Heart right ventricle (tissue), 16 donors: ENCODE measurements at regions of chr3 and their contacts with region 1.

Region 1: DNA sequence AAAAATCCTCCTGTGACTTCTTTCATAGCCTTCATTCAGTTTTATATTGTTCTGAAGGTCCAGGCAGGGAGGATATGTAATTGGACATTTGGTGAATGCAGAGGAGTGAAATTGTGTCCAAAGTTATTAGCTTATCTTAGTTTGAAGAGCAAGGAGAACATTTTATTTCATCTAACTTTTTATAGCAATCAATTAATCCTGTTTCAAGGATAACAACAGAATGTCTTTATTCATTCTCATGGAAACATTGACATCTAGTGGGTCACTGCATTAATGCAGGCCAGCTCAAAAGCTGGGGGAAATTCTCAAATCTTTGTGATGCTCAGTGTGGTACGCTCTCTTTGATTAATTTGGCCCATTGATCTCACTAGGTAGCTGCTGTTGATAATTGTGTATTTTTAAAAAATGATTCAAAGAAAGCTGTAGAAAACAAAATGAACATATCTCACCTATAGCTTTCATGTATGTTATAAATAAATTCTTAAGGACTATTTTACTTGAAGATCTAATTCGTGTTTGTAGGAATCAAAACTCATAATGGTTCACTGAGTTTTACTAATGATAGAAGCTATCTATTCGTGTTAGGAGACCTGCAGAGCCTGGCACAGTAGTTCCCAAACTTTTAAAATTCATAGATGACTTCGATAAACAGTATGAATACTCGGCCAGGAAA is 150.8 kb upstream of the KCNMB2 start:
- DNase-seq: no peak
- ATAC-seq: peak in 6 of 8 donors; percentile 52 to 74 (median 62)
- H3K4me3 ChIP-seq: peak overlapping the region in 2 of 10 donors; percentile 2 to 28
- H3K27ac ChIP-seq: peak overlapping the region in 6 of 10 donors; percentile 25 to 78 (median 69)
- H3K4me1 ChIP-seq: peaks cover 7 to 41% (median 30%) of the 10 kb centered on the region in 9 donors
- H3K27me3 ChIP-seq: no peaks in the 10 kb centered on the region
- CTCF ChIP-seq: peak; percentile 66 to 92 (median 86)

Region 2: GRCh38 chr3:176872771-176873209 is 1512.6 kb before region 1 on chr3:
- intact Hi-C with region 1: loop called in 7 of 10 experiments (anchors 2 to 10 kb)
- DNase-seq: peak in 1 of 2 donors; percentile 45
- ATAC-seq: peak in 7 of 8 donors; percentile 61 to 75 (median 75)
- H3K4me3 ChIP-seq: no peak overlapping the region
- H3K27ac ChIP-seq: no peak overlapping the region
- H3K4me1 ChIP-seq: peaks cover 0 to 11% (median 0%) of the 10 kb centered on the region in 9 donors
- H3K27me3 ChIP-seq: no peaks in the 10 kb centered on the region
- CTCF ChIP-seq: peak; percentile 52 to 80 (median 72)

Region 3: GRCh38 chr3:177050501-177051237 is 1334.7 kb before region 1 on chr3:
- intact Hi-C with region 1: loop called in 5 of 10 experiments (anchors 2 to 10 kb)
- DNase-seq: no peak
- ATAC-seq: peak in 7 of 8 donors; percentile 48 to 87 (median 65)
- H3K4me3 ChIP-seq: no peak overlapping the region
- H3K27ac ChIP-seq: no peak overlapping the region
- H3K4me1 ChIP-seq: peaks cover 0 to 23% (median 15%) of the 10 kb centered on the region in 9 donors
- H3K27me3 ChIP-seq: no peaks in the 10 kb centered on the region
- CTCF ChIP-seq: peak in 8 of 9 donors; percentile 29 to 76 (median 62)

Region 4: GRCh38 chr3:177729956-177730681 is 655.3 kb before region 1 on chr3:
- intact Hi-C with region 1: loop called in 1 of 10 experiments (anchors 10 kb)
- DNase-seq: peak; percentile 41 to 69
- ATAC-seq: peak; percentile 85 to 93 (median 88)
- H3K4me3 ChIP-seq: no peak overlapping the region
- H3K27ac ChIP-seq: peak overlapping the region in 6 of 10 donors; percentile 11 to 59 (median 33)
- H3K4me1 ChIP-seq: peaks cover 0 to 37% (median 15%) of the 10 kb centered on the region in 9 donors
- H3K27me3 ChIP-seq: no peaks in the 10 kb centered on the region
- CTCF ChIP-seq: no peak

Region 5: GRCh38 chr3:178500631-178501030 is 115.2 kb after region 1 on chr3:
- intact Hi-C with region 1: no loop called
- DNase-seq: no peak
- ATAC-seq: no peak
- H3K4me3 ChIP-seq: no peak overlapping the region
- H3K27ac ChIP-seq: no peak overlapping the region
- H3K4me1 ChIP-seq: no peaks in the 10 kb centered on the region
- H3K27me3 ChIP-seq: no peaks in the 10 kb centered on the region
- CTCF ChIP-seq: no peak